ENCODE measurements at regions of chr1 and their contacts with region 1.

Region 1: GRCh38 chr1:155996166-155996565 is 17.8 kb upstream of the ARHGEF2 start:
- DNase-seq: no peak
- H3K4me3 ChIP-seq: no peak overlapping the region
- H3K27ac ChIP-seq: no peak overlapping the region
- H3K4me1 ChIP-seq: no peaks in the 10 kb centered on the region
- H3K27me3 ChIP-seq: no peaks in the 10 kb centered on the region
- CTCF ChIP-seq: no peak
- POLR2A ChIP-seq: no peak

Region 2: GRCh38 chr1:156006666-156007376 is 10.7 kb after region 1 on chr1:
- CTCF ChIA-PET with region 1: interaction called, 15 read pairs
- POLR2A ChIA-PET with region 1: no interaction called
- dilution Hi-C with region 1: no loop called
- intact Hi-C with region 1: no loop called
- DNase-seq: no peak
- H3K4me3 ChIP-seq: no peak overlapping the region
- H3K27ac ChIP-seq: no peak overlapping the region
- H3K4me1 ChIP-seq: no peaks in the 10 kb centered on the region
- H3K27me3 ChIP-seq: no peaks in the 10 kb centered on the region
- CTCF ChIP-seq: no peak
- POLR2A ChIP-seq: no peak

Region 3: GRCh38 chr1:156054500-156055280 is 58.5 kb after region 1 on chr1 and contains the start of gene LAMTOR2:
- CTCF ChIA-PET with region 1: no interaction called
- POLR2A ChIA-PET with region 1: no interaction called
- dilution Hi-C with region 1: no loop called
- intact Hi-C with region 1: no loop called
- DNase-seq: peak; percentile 98
- H3K4me3 ChIP-seq: peak within 1 kb of the TSS; percentile 57 to 78 (median 74)
- H3K27ac ChIP-seq: peak within 1 kb of the TSS; percentile 95
- H3K4me1 ChIP-seq: peaks cover 15% of the 10 kb centered on the region
- H3K27me3 ChIP-seq: no peaks in the 10 kb centered on the region
- CTCF ChIP-seq: no peak
- POLR2A ChIP-seq: peak; percentile 78
- total RNA-seq, gene LAMTOR2: 77.7 and 80.3 TPM in 2 replicates

Region 4: DNA sequence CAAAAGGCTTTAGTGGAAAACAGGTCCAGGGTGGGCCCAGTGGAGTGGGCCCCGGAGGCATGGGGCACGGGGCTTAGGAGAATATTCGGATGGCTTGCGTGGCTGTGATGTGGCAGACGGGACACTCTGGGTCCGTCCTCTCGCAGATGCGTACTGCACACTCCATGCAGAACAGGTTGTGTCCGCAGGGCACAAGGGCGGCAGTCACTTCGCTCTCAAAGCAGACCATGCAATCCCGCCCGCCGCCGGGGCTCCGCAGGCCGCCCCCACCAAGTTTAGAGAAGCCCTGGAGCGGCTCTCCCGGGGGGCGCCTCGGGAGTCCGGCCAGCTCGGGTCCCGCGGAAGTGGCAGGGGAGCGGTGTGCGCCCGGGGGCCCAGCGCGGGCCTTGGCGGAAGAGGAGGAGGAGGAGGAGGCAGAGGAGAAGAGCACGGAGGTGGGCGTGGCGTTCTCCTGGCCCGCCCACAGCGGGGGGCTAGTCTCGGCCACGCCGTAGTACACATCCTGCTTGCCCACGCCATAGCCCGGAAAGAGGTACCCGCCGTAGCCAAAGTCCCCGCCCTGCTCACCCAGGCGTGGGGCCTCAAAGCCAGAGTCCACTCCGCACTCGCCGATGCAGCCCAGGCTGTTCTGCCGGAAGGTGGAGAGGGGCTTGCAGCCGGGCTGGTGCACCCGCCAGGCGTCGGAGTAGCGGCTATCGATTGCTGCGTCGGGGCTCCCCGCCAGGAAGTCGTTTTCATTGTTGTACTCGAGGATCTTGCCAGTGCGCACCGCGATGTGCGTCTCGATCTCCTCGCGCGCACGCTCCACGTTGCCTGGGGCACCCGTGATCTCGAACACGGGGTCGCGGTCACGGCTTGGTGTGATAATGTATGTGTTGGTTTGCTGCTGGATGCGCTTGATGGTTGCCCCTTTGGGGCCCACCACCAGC is 80.6 kb after region 1 on chr1:
- CTCF ChIA-PET with region 1: no interaction called
- POLR2A ChIA-PET with region 1: no interaction called
- dilution Hi-C with region 1: no loop called
- intact Hi-C with region 1: no loop called
- DNase-seq: no peak
- H3K4me3 ChIP-seq: no peak overlapping the region
- H3K27ac ChIP-seq: no peak overlapping the region
- H3K4me1 ChIP-seq: peaks cover 14% of the 10 kb centered on the region
- H3K27me3 ChIP-seq: no peaks in the 10 kb centered on the region
- CTCF ChIP-seq: no peak
- POLR2A ChIP-seq: no peak

Region 5: DNA sequence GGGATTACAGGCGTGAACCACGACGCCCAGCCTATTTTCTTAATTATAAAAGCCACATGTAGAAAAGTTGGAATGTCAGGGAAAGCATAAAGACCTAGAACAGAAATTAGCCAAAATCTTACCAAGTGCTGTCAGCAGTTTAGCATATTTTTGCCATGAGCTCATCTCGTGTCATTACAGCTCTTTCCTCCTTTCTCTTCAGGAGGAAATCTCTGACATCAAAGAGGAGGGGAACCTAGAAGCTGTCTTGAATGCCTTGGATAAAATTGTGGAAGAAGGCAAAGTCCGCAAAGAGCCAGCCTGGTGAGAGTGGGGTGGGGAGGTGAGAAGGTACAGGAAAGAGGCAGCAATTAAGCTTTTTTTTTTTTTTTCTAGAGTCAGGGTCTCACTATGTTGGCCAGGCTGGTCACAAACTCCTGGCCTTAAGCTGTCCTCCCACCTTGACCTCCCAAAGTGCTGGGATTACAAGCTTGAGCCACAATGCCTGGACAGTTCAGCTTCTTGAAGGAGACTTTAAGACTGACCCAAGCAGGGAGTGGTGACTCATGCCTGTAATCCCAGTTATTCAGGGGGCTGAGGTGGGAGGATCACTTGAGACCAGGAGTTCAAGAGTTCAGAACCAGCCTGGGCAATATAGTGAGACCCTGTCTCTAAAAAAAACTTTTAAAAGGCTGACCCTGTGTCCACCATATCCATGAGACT is 237.4 kb after region 1 on chr1:
- CTCF ChIA-PET with region 1: no interaction called
- POLR2A ChIA-PET with region 1: no interaction called
- dilution Hi-C with region 1: no loop called
- intact Hi-C with region 1: no loop called
- DNase-seq: no peak
- H3K4me3 ChIP-seq: no peak overlapping the region
- H3K27ac ChIP-seq: peak overlapping the region; percentile 60
- H3K4me1 ChIP-seq: peaks cover 12% of the 10 kb centered on the region
- H3K27me3 ChIP-seq: no peaks in the 10 kb centered on the region
- CTCF ChIP-seq: no peak
- POLR2A ChIP-seq: no peak

Measured in endothelial cell of umbilical vein (primary cell).